Activated CD8-positive, alpha-beta T cell treated with anti-CD3 and anti-CD28 coated beads, Interleukin-2, amount 10 ng/mL, durations not matched to agents 7 days and 5 days (primary cell): ENCODE measurements at regions of chr7 and their contacts with region 1.

Region 1: DNA sequence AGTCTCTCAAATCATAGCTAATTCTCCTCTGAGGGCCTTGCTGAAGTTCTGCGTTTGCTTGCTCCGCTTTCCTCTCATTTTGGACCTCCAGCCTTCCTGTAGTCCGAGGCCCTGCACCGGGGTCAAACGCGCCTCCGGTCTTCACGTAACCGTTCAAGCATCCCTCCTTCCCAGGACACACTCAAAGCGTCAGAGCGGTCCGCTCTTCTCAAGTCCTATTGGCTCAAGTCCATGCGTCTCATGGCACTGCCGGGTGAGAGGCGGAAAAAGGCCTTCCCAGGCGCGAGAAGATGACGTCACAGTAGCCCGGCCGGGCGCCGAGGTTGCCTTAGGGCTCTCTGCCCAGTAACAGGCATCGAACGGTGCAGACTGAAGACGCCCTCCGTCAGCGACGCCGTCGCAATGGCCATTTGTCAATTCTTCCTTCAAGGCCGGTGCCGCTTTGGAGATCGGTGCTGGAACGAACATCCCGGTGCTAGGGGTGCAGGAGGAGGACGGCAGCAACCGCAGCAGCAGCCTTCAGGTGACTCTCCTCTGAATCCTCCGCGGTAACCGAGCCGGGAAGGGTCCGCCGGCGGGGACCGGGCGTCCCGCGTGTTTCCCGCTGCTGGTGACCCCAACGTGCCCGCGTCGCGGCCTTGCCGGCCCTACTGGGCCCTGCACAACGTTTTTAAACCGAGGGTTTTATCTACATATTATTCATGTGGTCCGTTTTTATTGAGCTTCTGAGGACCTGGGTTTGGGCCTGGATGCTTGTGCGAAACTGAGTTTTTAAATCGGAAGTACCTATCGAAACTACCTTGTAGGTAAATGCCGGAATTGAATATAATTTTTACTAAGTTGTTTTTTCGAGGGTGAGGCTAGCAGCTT is at the start of gene NUP42:
- DNase-seq: peak; percentile 98
- ATAC-seq: peak; percentile 95
- H3K4me3 Mint-ChIP-seq: peak within 1 kb of the TSS; percentile 92
- H3K27ac Mint-ChIP-seq: peak within 1 kb of the TSS; percentile 100
- H3K4me1 Mint-ChIP-seq: peaks cover 36% of the 10 kb centered on the region
- H3K27me3 Mint-ChIP-seq: peaks cover 4% of the 10 kb centered on the region
- total RNA-seq, gene NUP42: 38.2 to 39.7 TPM

Region 2: GRCh38 chr7:23105644-23106056 is 76.3 kb before region 1 on chr7 and contains the start of gene KLHL7:
- CTCF ChIA-PET with region 1: interaction called, 6 read pairs
- POLR2A ChIA-PET with region 1: interaction called, 27 read pairs
- DNase-seq: peak; percentile 97
- ATAC-seq: peak; percentile 98
- H3K4me3 Mint-ChIP-seq: peak within 1 kb of the TSS; percentile 98
- H3K27ac Mint-ChIP-seq: peak within 1 kb of the TSS; percentile 95
- H3K4me1 Mint-ChIP-seq: peaks cover 23% of the 10 kb centered on the region
- H3K27me3 Mint-ChIP-seq: no peaks in the 10 kb centered on the region
- total RNA-seq, gene KLHL7: 20.3 to 23.0 TPM

Region 3: DNA sequence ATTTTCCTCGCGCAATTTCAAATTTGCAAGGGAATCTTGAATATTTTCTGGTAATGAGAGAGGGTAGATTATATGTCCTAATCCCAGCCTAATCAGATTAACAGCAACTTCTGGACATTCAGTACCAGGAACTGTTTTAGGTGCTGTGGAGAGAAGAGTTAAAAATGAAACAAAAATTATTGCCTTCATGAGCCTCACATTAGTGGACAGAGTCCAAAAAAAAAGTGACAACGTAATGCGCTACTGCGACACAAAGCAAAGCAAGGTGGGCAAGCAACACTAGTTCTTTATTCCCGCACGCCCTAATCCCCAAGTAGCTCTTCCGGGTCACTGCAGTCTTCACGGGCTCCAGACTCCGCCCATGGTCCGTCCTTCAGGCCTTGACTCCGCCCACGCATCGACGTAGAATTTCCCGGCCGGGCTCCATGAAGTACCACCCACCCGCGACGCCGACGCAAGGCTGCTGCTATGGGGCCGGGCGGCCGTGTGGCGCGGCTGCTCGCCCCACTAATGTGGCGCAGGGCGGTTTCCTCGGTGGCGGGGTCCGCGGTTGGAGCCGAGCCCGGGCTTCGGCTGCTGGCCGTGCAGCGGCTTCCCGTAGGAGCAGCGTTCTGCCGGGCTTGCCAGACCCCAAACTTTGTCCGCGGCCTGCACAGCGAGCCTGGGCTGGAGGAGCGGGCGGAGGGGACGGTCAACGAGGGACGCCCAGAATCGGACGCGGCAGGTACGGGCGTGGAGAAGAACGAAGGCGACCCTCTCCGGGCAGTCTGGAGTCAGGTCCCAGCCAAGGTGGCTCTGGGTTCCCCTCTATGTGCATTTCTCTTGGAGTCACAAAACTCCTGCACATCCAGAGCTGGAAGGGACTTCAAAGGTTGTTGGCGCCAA is 117.2 kb after region 1 on chr7 and contains the start of gene MALSU1:
- CTCF ChIA-PET with region 1: no interaction called
- POLR2A ChIA-PET with region 1: no interaction called
- DNase-seq: peak; percentile 98
- ATAC-seq: peak; percentile 100
- H3K4me3 Mint-ChIP-seq: peak within 1 kb of the TSS; percentile 84
- H3K27ac Mint-ChIP-seq: peak within 1 kb of the TSS; percentile 89
- H3K4me1 Mint-ChIP-seq: peaks cover 35% of the 10 kb centered on the region
- H3K27me3 Mint-ChIP-seq: no peaks in the 10 kb centered on the region
- total RNA-seq, gene MALSU1: 53.3 to 55.0 TPM